Thyroid gland (tissue), 4 donors: ENCODE measurements at regions of chr14 and their contacts with region 1.

Region 1: DNA sequence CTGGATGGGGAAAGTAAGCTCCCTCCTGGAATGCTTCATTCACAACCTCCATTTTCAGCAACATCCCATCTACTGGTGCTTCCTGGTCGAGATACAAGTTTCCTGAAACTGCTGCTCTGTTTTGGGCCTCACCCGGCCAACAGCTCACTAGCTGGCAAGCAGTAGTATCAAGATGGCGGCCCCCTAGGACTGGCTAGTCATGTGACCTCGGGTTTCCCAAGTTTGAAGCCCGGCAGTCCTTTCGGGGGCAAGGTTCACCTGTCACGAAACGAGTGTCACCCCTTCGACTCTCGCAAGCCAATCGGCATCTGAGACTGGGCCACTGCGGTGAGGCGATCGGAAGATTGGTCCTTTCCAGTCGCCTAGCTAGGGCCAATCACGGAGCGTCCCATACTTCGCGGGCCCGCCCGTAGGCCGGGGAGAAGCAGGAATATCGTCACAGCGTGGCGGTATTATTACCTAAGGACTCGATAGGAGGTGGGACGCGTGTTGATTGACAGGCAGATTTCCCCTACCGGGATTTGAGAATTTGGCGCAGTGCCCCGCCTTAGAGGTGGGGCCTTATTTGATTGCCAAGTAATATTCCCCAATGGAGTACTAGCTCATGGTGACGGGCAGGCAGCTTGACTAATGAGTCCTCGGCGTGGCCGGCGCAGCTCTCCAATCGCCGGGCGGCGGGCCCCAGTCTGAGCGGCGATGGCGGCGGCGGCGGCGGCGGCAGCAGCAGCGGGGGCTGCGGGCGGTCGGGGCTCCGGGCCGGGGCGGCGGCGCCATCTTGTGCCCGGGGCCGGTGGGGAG is at the start of gene PABPN1:
- DNase-seq: peak; percentile 99 to 100
- H3K4me3 ChIP-seq: peak within 1 kb of the TSS; percentile 85 to 95 (median 89)
- H3K27ac ChIP-seq: peak within 1 kb of the TSS; percentile 94 to 98 (median 97)
- H3K4me1 ChIP-seq: peaks cover 18 to 20% of the 10 kb centered on the region in 2 donors
- H3K27me3 ChIP-seq: no peaks in the 10 kb centered on the region
- CTCF ChIP-seq: no peak
- POLR2A ChIP-seq: peak; percentile 28 to 89
- total RNA-seq, gene PABPN1: 37.9 to 74.6 (median 60.5) TPM

Region 2: DNA sequence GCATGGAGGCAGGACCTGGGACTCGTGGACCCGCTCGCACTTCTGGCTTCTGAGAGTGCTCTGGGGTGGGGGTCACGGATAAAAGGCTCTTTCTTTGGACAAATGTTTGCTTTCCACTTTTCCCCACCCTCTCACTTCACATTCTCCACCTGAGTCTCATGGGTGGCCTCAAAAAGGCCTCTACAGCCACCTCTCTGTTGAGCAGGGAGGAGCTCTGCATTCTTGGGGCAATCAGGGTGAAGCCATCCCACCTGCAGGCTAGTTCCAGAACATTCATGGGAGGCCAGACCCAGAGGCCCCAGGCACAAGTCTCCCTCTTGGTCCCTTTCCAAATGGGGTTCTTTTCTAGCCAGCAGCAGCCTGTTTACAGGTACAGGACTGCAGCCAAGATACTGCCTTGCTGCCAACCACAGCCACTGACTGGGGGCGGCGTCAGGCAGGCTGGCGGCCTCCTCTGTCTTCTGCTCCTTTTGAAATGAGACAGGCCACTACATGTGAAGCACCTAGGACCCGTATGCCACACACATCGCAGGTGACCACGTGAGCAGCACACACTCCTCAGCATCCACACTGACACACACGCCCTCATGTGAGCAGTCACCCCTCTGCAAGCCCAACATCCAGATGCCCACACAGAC is 183.7 kb before region 1 on chr14:
- intact Hi-C with region 1: no loop called
- DNase-seq: no peak
- H3K4me3 ChIP-seq: no peak overlapping the region
- H3K27ac ChIP-seq: no peak overlapping the region
- H3K4me1 ChIP-seq: peaks cover 0 to 8% of the 10 kb centered on the region in 2 donors
- H3K27me3 ChIP-seq: no peaks in the 10 kb centered on the region
- CTCF ChIP-seq: no peak
- POLR2A ChIP-seq: no peak

Region 3: DNA sequence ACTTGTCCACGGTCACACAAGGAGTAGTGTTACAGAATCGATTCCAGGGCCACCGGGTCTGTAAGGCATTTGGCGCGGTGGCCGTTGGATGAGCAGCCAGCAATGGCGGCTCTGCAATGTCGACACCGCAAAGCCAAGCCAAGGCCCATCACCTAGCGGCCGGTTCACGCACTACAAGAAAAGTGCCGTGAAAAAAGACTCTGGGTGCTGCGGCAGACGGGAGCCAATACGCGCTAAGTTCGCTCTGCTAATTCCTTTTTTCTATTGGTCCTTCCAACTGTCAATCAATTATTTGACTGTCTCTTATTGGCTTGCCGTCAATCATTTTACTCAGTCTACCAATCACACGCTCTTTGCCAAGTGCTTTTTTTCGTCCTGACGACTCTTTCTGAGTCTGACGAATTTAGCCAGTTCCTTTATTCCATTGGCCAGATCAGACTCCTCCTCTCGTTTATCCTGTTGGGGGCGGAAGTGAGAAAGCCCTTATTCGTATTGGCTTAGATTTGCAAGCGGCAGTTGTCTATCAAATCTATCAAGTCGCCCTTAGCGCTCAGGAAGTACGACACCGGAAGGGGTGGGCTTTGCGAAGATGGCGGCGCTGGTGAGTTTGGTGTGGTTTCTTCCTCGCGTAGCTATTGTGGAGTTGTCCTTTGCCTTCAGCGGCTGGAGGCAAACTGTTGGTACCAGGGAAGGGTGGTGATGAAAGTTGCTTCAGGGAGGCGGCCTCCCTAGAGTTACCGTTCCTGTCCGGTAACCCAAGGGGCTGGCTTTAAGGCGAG is 148.3 kb after region 1 on chr14 and contains the start of gene NGDN:
- intact Hi-C with region 1: loop called (anchors 10 kb)
- DNase-seq: peak; percentile 94
- H3K4me3 ChIP-seq: peak within 1 kb of the TSS; percentile 57 to 79 (median 61)
- H3K27ac ChIP-seq: peak within 1 kb of the TSS; percentile 62 to 71 (median 63)
- H3K4me1 ChIP-seq: peaks cover 6 to 8% of the 10 kb centered on the region in 2 donors
- H3K27me3 ChIP-seq: no peaks in the 10 kb centered on the region
- CTCF ChIP-seq: peak; percentile 44 to 95 (median 80)
- POLR2A ChIP-seq: peak in 1 of 2 donors; percentile 45
- total RNA-seq, gene NGDN: 31.3 to 51.1 (median 39.7) TPM